ENCODE measurements at regions of chr10 and their contacts with region 1.

Region 1: DNA sequence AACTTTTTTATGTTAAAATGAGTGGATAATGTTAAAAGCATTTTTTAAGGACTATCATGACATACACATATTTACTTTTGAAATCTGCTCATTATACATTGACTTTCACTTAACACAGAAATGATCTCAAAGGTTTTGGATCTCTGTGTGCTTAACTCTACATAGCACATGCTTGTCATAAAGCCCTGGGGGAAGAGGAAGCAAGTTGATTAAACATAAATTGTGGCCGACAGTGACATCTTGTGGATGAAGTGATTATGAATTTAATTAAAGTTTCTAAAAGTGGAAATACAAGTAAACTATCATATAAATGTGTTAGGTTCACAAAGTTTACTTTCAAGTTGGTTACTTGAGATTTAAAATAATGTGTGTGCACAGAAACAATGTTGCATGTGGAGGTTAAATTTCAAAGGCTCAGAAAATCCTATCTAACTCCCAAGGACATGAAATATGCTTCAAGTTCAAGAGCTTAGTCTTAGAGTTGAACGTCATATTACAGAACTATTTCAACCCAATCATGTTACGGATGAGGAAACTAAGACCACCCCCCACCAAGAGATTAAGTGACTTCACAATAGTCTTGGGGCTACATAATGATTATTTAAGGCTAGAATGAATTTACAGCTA is 1247.7 kb downstream of the GATA3 start:
- DNase-seq: peak in 1 of 2 experiments; percentile 61
- H3K4me3 ChIP-seq: no peak overlapping the region
- H3K27ac ChIP-seq: no peak overlapping the region
- H3K4me1 ChIP-seq: peaks cover 8% of the 10 kb centered on the region; the same call in 1 of the 2 replicates
- H3K27me3 ChIP-seq: no peaks in the 10 kb centered on the region
- CTCF ChIP-seq: peak; percentile 72

Region 2: GRCh38 chr10:7525314-7526016 is 1776.8 kb before region 1 on chr10:
- CTCF ChIA-PET with region 1: interaction called, 7 read pairs
- POLR2A ChIA-PET with region 1: no interaction called
- intact Hi-C with region 1: loop called (anchors 1 kb)
- DNase-seq: peak; percentile 42 to 49
- H3K4me3 ChIP-seq: no peak overlapping the region
- H3K27ac ChIP-seq: no peak overlapping the region
- H3K4me1 ChIP-seq: no peaks in the 10 kb centered on the region
- H3K27me3 ChIP-seq: peaks cover 16% of the 10 kb centered on the region
- CTCF ChIP-seq: peak; percentile 78

Region 3: DNA sequence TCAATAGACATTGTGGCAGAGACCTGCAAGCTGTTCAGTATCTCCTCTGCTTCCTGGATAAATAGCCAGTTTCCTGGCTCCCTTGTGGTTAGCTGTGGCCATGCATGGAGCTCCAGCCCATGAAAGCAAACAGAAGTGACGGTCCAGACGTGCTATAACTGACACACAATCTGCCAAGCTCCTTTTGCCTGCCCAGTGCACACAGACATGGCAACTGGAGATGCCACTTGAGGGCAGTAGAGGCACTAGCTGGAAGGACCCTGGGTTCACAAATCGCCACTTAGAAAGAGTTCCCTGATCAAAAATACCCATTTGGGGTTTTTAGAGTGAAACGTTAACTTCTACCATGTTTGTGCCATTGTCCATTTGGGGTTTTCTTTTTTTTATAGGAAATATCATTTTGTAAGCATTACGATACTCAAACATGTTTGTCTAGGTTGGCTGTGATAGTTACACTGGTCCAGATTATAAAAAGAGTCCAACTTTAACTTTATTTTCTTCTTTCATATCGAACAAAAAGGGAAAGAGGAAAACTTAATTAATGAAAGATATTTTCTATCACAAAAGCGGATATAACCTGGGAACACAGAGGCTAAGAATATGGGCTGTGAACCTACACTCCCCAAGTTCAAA is 1545.8 kb before region 1 on chr10:
- CTCF ChIA-PET with region 1: no interaction called
- POLR2A ChIA-PET with region 1: no interaction called
- intact Hi-C with region 1: loop called (anchors 10 kb)
- DNase-seq: peak in 1 of 2 experiments; percentile 9
- H3K4me3 ChIP-seq: no peak overlapping the region
- H3K27ac ChIP-seq: no peak overlapping the region
- H3K4me1 ChIP-seq: no peaks in the 10 kb centered on the region
- H3K27me3 ChIP-seq: no peaks in the 10 kb centered on the region
- CTCF ChIP-seq: peak; percentile 34; the same call in 1 of the 2 replicates

Region 4: DNA sequence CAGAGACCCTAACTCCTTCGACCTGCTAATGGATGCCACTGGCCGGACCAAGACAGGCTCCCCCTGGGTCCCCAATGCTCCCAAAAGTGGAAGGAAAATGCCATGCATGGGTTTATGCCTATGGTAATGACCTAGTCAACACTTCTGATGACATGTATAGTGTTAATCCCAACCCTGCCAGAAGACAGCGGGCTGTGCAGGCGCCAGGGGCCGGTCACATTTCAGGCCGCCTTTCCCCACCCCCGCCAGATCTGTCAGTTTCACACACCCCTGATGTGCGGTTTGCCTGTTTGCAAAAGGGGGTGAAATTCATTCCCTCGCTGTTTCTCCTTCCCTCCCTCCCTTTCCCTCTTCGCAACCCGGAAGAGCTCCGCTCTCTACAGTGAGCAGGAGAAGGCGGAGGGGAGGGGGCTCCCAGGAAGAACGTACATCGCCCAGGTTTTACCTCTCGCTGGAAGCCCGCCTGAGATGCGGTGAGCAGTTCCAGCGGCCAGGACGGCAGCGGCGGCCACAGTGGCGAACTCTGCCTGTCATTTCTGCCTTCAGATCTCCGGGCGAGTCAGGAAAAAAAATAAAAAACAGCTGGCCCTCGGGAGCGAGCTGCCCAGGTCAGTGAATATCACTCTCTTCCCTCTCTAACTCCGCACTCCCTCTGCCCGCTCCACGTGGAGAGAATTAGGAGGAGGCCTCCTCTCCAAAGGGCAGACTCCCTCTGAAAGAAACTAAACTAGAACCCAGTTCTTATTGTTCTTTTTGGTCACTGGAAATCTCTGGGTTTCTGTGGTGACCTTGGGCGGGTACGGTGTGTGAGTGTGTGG is 1257.1 kb before region 1 on chr10:
- CTCF ChIA-PET with region 1: no interaction called
- POLR2A ChIA-PET with region 1: no interaction called
- intact Hi-C with region 1: loop called (anchors 10 kb)
- DNase-seq: peak; percentile 34 to 55
- H3K4me3 ChIP-seq: peak overlapping the region; percentile 76
- H3K27ac ChIP-seq: 0 out of 2 replicates have a peak overlapping the region, but pooled peaks have one; percentile 32
- H3K4me1 ChIP-seq: no peaks in the 10 kb centered on the region
- H3K27me3 ChIP-seq: no peaks in the 10 kb centered on the region
- CTCF ChIP-seq: no peak

Region 5: GRCh38 chr10:9175200-9175599 is 127.0 kb before region 1 on chr10:
- CTCF ChIA-PET with region 1: no interaction called
- POLR2A ChIA-PET with region 1: no interaction called
- intact Hi-C with region 1: no loop called
- DNase-seq: no peak
- H3K4me3 ChIP-seq: no peak overlapping the region
- H3K27ac ChIP-seq: no peak overlapping the region
- H3K4me1 ChIP-seq: no peaks in the 10 kb centered on the region
- H3K27me3 ChIP-seq: no peaks in the 10 kb centered on the region
- CTCF ChIP-seq: no peak

Region 6: GRCh38 chr10:9209105-9209798 is 93.0 kb before region 1 on chr10:
- CTCF ChIA-PET with region 1: interaction called, 3 read pairs
- POLR2A ChIA-PET with region 1: no interaction called
- intact Hi-C with region 1: loop called (anchors 2 kb)
- DNase-seq: peak; percentile 61 to 69
- H3K4me3 ChIP-seq: no peak overlapping the region
- H3K27ac ChIP-seq: no peak overlapping the region
- H3K4me1 ChIP-seq: no peaks in the 10 kb centered on the region
- H3K27me3 ChIP-seq: no peaks in the 10 kb centered on the region
- CTCF ChIP-seq: peak; percentile 87

Measured in PC-9 (cell line).